Natural killer cell (primary cell): ENCODE measurements at regions of chr7 and their contacts with region 1.

Region 1: DNA sequence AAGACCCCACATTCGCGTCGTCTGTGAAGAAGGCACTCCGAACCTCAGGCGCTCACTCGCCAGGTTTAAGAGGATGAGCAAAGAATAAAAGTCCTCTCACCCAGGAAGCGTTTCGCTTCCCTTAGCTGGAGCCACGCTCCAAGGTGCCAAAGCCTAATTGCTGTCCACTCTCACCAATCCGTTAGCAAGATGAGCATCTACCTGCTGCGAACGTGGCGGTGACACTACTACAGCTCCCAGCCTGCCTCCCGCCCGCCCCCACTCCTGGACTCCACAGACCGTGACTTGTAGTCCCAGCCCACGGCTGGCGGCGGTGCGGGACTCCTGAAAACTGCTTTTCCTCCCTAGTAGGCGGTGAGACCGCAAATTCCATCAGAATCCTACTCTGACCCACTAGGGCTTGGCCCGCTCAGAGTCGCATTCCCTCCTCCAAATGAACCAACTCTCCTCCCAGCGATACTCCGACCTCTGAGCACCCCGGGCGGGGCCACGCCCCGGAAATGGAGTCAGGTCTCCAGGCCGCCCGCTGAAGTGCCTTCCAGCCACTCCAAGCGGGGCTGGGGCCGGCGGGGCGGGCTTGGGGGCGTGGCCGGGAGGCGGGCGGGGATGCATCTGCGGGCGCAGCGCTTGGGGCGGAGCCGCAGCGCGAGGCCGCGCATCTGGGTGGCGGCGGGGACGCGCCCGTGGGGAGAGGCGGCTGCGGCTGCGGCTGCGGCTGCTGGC is 521 bp upstream of the PTPN12 start:
- DNase-seq: peak; percentile 90 to 96
- ATAC-seq: peak; percentile 80 to 95 (median 86)
- H3K4me3 ChIP-seq: peak overlapping the region; percentile 63
- H3K4me3 Mint-ChIP-seq: peak overlapping the region; percentile 94
- H3K27ac ChIP-seq: peak overlapping the region; percentile 62
- H3K27ac Mint-ChIP-seq: peak overlapping the region; percentile 80
- H3K4me1 ChIP-seq: peaks cover 27% of the 10 kb centered on the region
- H3K4me1 Mint-ChIP-seq: peaks cover 35 to 38% of the 10 kb centered on the region in 2 donors
- H3K27me3 ChIP-seq: no peaks in the 10 kb centered on the region
- H3K27me3 Mint-ChIP-seq: no peaks in the 10 kb centered on the region
- CTCF ChIP-seq: no peak

Region 2: DNA sequence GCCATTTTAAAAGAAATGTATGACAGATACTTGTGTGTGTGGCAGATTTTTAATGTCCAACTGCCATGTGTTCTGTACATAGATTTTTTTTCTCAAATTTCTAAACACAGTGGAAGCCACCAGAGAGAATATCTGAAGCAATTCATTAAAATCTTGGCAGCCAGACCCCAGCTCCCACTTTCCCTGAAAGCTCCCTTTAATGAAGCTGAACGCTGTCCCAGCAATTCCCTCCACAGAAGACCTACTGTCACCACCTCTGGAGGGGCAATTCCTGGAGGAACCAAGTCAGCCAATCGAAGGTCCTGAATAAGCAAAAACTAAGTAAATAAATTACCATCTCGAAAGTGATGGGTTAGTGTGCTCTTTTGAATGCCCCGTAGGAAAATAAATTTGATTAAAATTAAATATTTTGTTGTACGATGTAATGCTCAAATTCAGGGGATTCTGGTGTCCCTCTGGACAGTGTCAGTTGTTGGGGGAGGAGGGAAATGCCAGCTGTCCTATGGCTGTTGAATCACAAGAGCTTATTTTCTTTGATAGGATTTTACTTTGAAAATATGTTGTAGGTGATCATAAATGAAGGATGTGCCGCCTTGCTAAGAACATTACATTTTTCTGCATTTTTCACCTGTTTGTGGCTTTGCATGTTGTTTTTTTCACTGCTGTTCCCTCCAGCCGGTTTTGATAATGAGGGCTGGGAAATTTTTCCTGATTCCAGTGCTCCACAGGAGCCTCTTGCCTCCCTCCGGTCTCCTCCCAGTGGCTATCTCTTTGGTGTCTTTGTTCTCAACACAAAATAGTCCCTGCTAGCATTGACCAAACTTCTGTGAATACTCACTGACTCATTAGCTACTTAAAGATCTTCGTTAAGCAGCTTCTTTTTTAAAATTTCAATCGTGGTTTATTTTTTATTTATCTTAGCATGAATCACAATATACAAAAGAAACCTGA is 111.2 kb before region 1 on chr7:
- intact Hi-C with region 1: loop called (anchors 5 kb)
- DNase-seq: no peak
- ATAC-seq: no peak
- H3K4me3 ChIP-seq: no peak overlapping the region
- H3K4me3 Mint-ChIP-seq: no peak overlapping the region
- H3K27ac ChIP-seq: no peak overlapping the region
- H3K27ac Mint-ChIP-seq: no peak overlapping the region
- H3K4me1 ChIP-seq: peaks cover 16% of the 10 kb centered on the region
- H3K4me1 Mint-ChIP-seq: peaks cover 24 to 29% of the 10 kb centered on the region in 2 donors
- H3K27me3 ChIP-seq: no peaks in the 10 kb centered on the region
- H3K27me3 Mint-ChIP-seq: no peaks in the 10 kb centered on the region
- CTCF ChIP-seq: no peak

Region 3: GRCh38 chr7:77548206-77548605 is 11.6 kb after region 1 on chr7:
- intact Hi-C with region 1: loop called (anchors 1 kb)
- DNase-seq: peak in 1 of 2 donors; percentile 56
- ATAC-seq: peak; percentile 70 to 87 (median 87)
- H3K4me3 ChIP-seq: no peak overlapping the region
- H3K4me3 Mint-ChIP-seq: peak overlapping the region; percentile 70
- H3K27ac ChIP-seq: peak overlapping the region; percentile 68
- H3K27ac Mint-ChIP-seq: peak overlapping the region; percentile 80 to 99
- H3K4me1 ChIP-seq: peaks cover 32% of the 10 kb centered on the region
- H3K4me1 Mint-ChIP-seq: peaks cover 78 to 79% of the 10 kb centered on the region in 2 donors
- H3K27me3 ChIP-seq: no peaks in the 10 kb centered on the region
- H3K27me3 Mint-ChIP-seq: no peaks in the 10 kb centered on the region
- CTCF ChIP-seq: no peak

Region 4: DNA sequence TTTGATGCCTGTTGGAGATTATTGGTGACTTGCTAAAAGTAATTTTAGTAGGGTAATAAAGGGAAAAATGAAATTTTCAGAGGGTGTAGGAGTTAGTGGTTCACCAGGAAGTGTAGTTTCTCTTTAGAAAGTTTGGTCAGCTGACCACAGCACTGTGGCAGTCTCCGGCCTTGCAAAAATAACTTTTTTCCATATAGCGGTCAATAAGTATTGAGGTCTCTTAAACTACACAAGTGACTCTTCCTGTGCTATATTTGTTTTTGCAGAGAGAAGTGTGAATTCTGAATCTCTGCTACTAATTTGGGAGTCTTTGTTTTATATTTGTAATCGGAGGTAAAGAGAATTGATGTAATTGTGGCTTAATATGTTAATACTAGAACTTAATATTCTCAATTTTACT is 24.8 kb after region 1 on chr7:
- intact Hi-C with region 1: loop called (anchors 1 kb)
- DNase-seq: peak in 1 of 2 donors; percentile 36
- ATAC-seq: peak; percentile 40 to 65 (median 64)
- H3K4me3 ChIP-seq: no peak overlapping the region
- H3K4me3 Mint-ChIP-seq: peak overlapping the region; percentile 85
- H3K27ac ChIP-seq: peak overlapping the region; percentile 69
- H3K27ac Mint-ChIP-seq: peak overlapping the region; percentile 97 to 99
- H3K4me1 ChIP-seq: peaks cover 44% of the 10 kb centered on the region
- H3K4me1 Mint-ChIP-seq: peaks cover 79 to 84% of the 10 kb centered on the region in 2 donors
- H3K27me3 ChIP-seq: no peaks in the 10 kb centered on the region
- H3K27me3 Mint-ChIP-seq: no peaks in the 10 kb centered on the region
- CTCF ChIP-seq: no peak

Region 5: DNA sequence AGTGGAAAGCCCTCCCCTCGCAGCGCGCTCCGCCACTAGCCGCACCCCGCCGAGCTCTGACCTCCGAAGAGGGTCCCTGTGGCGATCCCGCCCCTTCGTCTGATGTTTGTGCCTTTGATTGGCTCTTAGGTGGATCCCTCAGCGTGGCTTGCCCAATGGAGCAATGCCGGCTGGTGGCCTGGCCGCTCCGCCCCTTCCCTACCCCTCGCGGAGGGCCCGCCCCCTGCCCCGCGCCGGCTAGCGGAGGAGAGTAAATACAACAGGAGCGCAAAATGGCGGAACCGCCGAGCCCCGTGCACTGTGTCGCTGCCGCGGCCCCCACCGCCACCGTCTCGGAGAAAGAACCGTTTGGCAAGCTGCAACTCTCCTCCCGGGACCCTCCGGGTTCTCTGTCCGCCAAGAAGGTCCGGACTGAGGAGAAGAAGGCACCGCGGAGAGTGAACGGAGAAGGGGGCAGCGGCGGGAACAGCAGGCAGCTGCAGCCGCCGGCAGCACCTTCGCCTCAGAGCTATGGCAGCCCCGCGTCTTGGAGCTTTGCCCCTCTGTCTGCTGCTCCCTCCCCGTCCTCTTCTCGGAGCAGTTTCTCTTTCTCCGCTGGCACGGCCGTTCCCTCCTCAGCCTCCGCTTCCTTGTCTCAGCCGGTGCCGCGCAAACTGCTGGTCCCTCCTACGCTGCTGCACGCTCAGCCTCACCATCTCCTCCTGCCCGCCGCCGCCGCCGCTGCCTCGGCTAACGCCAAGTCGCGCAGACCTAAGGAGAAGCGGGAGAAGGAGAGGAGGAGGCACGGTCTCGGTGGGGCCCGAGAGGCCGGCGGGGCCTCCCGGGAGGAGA is 159.8 kb after region 1 on chr7 and contains the start of gene RSBN1L:
- intact Hi-C with region 1: loop called (anchors 2 kb)
- DNase-seq: peak; percentile 97 to 99
- ATAC-seq: peak; percentile 93 to 99 (median 95)
- H3K4me3 ChIP-seq: peak within 1 kb of the TSS; percentile 84
- H3K4me3 Mint-ChIP-seq: peak within 1 kb of the TSS; percentile 99
- H3K27ac ChIP-seq: peak within 1 kb of the TSS; percentile 85
- H3K27ac Mint-ChIP-seq: peak within 1 kb of the TSS; percentile 96 to 97
- H3K4me1 ChIP-seq: peaks cover 15% of the 10 kb centered on the region
- H3K4me1 Mint-ChIP-seq: peaks cover 55 to 57% of the 10 kb centered on the region in 2 donors
- H3K27me3 ChIP-seq: no peaks in the 10 kb centered on the region
- H3K27me3 Mint-ChIP-seq: no peaks in the 10 kb centered on the region
- CTCF ChIP-seq: peak; percentile 53
- total RNA-seq, gene RSBN1L: 23.9 to 34.4 (median 33.4) TPM

Region 6: GRCh38 chr7:77798394-77799077 is 262.0 kb after region 1 on chr7 and contains the starts of genes PHTF2 and TMEM60:
- intact Hi-C with region 1: loop called (anchors 5 kb)
- DNase-seq: peak; percentile 89 to 98
- ATAC-seq: peak; percentile 88 to 97 (median 91)
- H3K4me3 ChIP-seq: peak within 1 kb of the TSS; percentile 88
- H3K4me3 Mint-ChIP-seq: peak within 1 kb of the TSS; percentile 98
- H3K27ac ChIP-seq: peak within 1 kb of the TSS; percentile 65
- H3K27ac Mint-ChIP-seq: peak within 1 kb of the TSS; percentile 92 to 96
- H3K4me1 ChIP-seq: peaks cover 16% of the 10 kb centered on the region
- H3K4me1 Mint-ChIP-seq: peaks cover 63 to 76% of the 10 kb centered on the region in 2 donors
- H3K27me3 ChIP-seq: no peaks in the 10 kb centered on the region
- H3K27me3 Mint-ChIP-seq: no peaks in the 10 kb centered on the region
- CTCF ChIP-seq: peak; percentile 59
- total RNA-seq, gene PHTF2: 23.1 to 26.9 (median 26.4) TPM
- total RNA-seq, gene TMEM60: 3.4 to 5.2 (median 3.9) TPM